SK-N-SH (cell line): ENCODE measurements at regions of chr18 and their contacts with region 1.

Region 1: DNA sequence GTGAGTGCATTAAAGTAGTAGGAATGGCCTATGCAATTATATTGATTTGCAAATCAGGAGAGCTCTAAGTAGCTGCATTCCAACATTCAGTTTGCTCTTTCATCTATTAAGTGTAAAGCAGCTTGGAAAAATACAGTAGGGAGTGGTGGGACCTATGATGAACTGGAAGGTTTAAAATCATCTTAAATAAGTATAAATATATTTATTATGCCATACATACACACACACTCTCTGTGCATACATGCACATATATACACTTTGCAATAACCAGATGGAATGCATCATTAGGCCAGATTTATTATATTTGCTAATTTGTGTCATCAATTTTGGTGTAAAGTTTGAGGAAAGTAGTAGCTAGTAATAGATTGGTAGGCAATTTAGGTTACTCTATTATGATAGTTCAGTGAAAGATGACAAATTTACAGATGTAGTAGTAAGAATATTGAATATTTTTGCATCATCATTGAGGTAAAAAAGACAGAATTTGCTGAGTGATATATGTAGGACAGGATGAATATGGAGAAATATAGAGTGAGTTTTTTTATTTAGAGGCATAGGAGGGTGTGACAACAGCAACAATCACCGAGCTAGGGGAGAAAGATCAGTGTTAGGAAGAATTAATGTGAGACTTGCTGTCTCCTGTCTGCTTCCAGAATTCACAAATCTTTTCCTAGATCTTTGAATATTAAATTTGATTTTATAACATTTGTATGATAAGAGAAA is 961.0 kb upstream of the CDH2 start:
- DNase-seq: no peak
- H3K4me3 ChIP-seq: no peak overlapping the region
- H3K27ac ChIP-seq: no peak overlapping the region
- H3K4me1 ChIP-seq: no peaks in the 10 kb centered on the region
- H3K27me3 ChIP-seq: no peaks in the 10 kb centered on the region
- CTCF ChIP-seq: no peak
- EP300 ChIP-seq: no peak
- RAD21 ChIP-seq: no peak

Region 2: DNA sequence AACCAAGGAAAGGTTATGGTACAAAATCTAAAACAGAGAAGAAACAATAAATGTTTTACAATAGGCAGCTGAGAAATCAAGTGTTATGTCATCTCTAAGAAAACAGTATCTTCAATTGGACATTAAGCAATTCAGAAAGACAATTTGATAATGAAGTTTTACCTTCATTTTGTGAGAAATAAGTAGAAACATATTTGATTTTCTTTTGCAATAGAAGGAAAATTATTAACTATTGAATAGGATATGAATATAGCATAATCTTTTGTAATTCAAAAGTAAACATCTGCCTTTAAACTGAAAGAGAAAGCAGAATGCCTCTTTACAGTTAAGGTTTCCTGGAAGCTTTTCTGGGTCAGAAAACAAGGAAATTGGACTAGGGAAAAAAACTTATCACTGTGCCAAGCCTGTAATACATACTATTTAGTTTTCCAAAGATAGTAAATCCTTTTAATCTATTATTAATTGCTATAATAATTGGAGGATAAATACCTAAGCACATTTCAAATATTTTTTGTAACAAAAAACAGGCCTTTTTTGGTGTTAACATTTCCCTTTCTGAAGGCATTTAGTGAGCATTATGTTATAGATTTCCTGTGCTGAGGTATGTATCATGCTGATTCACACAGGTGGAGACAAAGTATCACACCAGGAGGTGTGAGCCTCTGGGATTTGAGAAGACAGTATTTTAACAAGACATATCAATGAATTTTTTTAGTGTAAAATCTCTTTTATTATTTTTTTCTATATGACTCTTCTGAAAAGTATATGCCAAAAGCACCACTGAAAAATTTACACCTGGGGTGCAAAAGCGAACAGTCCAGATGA is 14.0 kb before region 1 on chr18:
- CTCF ChIA-PET with region 1: interaction called, 11 read pairs
- POLR2A ChIA-PET with region 1: no interaction called
- DNase-seq: no peak
- H3K4me3 ChIP-seq: no peak overlapping the region
- H3K27ac ChIP-seq: no peak overlapping the region
- H3K4me1 ChIP-seq: no peaks in the 10 kb centered on the region
- H3K27me3 ChIP-seq: no peaks in the 10 kb centered on the region
- CTCF ChIP-seq: no peak
- EP300 ChIP-seq: no peak
- RAD21 ChIP-seq: no peak

Region 3: GRCh38 chr18:29171892-29172755 is 34.2 kb after region 1 on chr18:
- CTCF ChIA-PET with region 1: no interaction called
- POLR2A ChIA-PET with region 1: no interaction called
- DNase-seq: no peak
- H3K4me3 ChIP-seq: no peak overlapping the region
- H3K27ac ChIP-seq: peak overlapping the region; percentile 34 to 65; a peak in 3 of 4 replicates
- H3K4me1 ChIP-seq: peaks cover 3 to 10% of the 10 kb centered on the region in 2 experiments; a peak in 3 of 4 replicates
- H3K27me3 ChIP-seq: no peaks in the 10 kb centered on the region
- CTCF ChIP-seq: no peak
- EP300 ChIP-seq: 0 out of 4 replicates have a peak, but pooled peaks of 1 of the 2 experiments have one; percentile 28
- RAD21 ChIP-seq: no peak